Activated CD8-positive, alpha-beta T cell treated with anti-CD3 and anti-CD28 coated beads for 36 hours (primary cell): ENCODE measurements at regions of chr6 and their contacts with region 1.

Region 1: DNA sequence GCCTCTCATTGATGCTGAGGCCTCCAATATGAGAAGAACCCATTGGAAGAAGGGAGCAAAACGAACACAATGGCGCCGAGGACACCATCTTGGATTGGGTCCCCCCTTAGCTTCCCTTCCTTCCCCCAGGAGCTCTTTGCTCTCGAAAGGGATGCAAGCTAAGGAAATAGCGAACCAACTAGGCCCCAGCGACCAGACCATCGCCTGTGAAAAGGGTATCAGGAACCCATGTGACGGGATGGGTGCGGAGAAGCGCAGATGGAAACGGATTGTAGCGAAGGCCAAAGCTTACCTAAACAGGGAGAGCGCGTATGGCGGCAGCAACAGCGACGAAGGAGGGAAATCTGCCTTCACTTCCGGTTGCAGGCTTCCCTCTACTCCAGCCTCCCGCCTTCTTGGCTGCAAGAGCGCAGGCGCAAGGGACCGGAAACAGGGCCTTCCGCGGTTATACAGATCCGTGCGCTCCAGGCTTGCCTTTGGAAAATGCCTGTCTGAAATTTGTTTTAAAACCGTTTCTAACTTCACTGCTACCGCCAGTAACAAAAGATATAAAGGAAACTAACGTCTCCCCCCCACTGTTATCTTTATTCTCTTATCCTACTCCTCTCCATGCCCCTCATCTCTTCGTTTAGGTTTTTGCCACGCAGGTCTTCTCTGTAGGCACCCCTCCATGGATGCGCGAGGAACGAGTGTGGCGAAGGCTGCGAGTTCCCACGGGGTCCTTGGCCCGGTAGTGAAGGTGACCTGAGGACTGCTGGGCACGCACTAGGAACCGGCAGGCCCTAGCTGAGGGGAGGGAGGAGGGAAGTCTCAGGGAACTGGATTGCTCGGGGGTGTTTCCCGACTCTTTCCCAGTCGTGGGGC is at the start of gene DDX39B:
- DNase-seq: peak; percentile 95
- ATAC-seq: peak; percentile 79
- H3K4me3 Mint-ChIP-seq: peak within 1 kb of the TSS; percentile 81
- H3K27ac Mint-ChIP-seq: peak within 1 kb of the TSS; percentile 95
- H3K4me1 Mint-ChIP-seq: peaks cover 43% of the 10 kb centered on the region
- H3K27me3 Mint-ChIP-seq: no peaks in the 10 kb centered on the region
- CTCF ChIP-seq: no peak
- total RNA-seq, gene DDX39B: 568 to 572 TPM

Region 2: DNA sequence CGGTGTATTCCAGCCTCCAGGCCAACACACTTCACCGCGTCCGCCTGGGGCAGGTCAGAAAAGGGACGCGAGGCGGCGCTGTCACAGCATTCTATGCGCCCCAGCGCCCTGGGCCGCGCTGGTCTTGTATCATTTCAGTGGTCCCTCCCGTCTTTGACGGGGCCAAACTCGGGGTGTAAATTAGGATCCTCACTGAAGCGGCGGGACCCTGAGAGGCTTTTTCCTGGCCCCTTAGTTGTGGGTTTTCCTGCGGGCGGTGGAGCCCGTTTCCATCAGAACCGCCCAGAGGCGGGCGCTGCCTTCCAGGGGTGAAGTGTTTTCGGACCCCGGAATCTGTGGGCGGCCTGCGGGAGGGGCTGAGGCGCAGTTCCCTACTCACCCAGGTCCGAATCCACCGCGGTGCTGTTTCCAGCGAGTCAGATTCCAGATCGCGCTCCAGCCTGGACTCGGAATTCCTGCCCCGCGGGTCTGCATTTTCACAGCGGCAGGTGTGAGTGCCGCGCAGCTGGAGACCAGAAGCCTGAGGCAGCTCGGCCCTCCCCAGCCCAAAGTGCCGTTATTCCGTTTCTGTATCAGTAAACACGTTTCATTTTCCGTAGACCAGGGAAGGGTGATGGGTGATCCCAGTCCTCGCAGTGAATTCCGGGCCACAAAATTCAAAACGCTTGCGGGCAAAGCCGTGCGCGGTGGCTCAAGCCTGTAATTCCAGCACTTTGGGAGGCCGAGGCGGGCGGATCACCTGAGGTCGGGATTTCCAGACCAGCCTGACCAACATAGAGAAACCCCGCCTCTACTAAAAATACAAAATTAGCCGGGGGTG is 47.8 kb before region 1 on chr6:
- CTCF ChIA-PET with region 1: interaction called, 26 read pairs
- POLR2A ChIA-PET with region 1: interaction called, 35 read pairs
- intact Hi-C with region 1: loop called (anchors 2 kb)
- DNase-seq: peak; percentile 91
- ATAC-seq: peak; percentile 50
- H3K4me3 Mint-ChIP-seq: peak overlapping the region; percentile 89
- H3K27ac Mint-ChIP-seq: peak overlapping the region; percentile 92
- H3K4me1 Mint-ChIP-seq: peaks cover 36% of the 10 kb centered on the region
- H3K27me3 Mint-ChIP-seq: no peaks in the 10 kb centered on the region
- CTCF ChIP-seq: peak; percentile 91

Region 3: DNA sequence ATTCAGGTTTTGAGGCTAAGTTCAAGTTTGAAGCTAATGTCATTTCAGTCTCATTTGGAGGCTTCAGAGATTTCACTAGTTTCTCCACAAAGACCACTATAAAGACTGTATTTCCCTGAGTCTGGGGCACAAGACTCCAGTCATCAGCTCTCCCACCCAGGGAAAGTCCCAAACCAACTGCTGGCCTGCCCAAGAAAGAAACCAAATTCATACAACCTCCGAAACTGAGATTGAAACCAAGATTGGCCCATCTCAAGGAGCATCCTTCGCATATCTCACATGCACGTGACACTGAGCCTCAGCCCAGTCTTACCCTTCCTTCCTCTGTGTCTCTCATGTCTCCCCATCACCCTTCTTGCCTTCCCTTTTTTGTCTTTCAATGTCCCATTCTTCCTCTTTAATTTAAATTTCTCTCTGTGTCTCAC is 26.7 kb after region 1 on chr6:
- CTCF ChIA-PET with region 1: interaction called, 2,542 read pairs
- POLR2A ChIA-PET with region 1: interaction called, 97 read pairs
- intact Hi-C with region 1: no loop called
- DNase-seq: peak; percentile 88
- ATAC-seq: peak; percentile 53
- H3K4me3 Mint-ChIP-seq: peak overlapping the region; percentile 54
- H3K27ac Mint-ChIP-seq: peak overlapping the region; percentile 91
- H3K4me1 Mint-ChIP-seq: peaks cover 70% of the 10 kb centered on the region
- H3K27me3 Mint-ChIP-seq: no peaks in the 10 kb centered on the region
- CTCF ChIP-seq: no peak

Region 4: DNA sequence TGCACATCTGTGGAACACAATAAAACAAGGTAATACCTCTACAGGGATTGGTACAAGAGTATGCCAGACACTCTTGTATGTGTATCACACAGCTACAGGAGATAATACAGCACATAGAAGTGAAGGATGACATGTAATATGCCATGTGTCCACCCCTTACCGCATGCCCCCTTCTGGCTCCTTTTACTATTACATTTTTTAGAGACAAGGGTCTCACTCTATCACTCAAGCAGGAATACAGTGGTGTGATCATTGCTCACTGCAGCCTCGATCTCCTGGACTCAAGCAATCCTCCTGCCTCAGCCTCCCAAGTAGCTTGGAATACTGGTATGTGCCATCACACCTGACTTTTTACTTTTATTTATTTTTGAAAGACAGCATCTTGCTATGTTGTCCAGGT is 55.1 kb after region 1 on chr6:
- CTCF ChIA-PET with region 1: interaction called, 2,542 read pairs
- POLR2A ChIA-PET with region 1: interaction called, 32 read pairs
- intact Hi-C with region 1: loop called (anchors 1 kb)
- DNase-seq: peak; percentile 71
- ATAC-seq: peak; percentile 68
- H3K4me3 Mint-ChIP-seq: no peak overlapping the region
- H3K27ac Mint-ChIP-seq: peak overlapping the region; percentile 37
- H3K4me1 Mint-ChIP-seq: peaks cover 43% of the 10 kb centered on the region
- H3K27me3 Mint-ChIP-seq: no peaks in the 10 kb centered on the region
- CTCF ChIP-seq: peak; percentile 80

Region 5: DNA sequence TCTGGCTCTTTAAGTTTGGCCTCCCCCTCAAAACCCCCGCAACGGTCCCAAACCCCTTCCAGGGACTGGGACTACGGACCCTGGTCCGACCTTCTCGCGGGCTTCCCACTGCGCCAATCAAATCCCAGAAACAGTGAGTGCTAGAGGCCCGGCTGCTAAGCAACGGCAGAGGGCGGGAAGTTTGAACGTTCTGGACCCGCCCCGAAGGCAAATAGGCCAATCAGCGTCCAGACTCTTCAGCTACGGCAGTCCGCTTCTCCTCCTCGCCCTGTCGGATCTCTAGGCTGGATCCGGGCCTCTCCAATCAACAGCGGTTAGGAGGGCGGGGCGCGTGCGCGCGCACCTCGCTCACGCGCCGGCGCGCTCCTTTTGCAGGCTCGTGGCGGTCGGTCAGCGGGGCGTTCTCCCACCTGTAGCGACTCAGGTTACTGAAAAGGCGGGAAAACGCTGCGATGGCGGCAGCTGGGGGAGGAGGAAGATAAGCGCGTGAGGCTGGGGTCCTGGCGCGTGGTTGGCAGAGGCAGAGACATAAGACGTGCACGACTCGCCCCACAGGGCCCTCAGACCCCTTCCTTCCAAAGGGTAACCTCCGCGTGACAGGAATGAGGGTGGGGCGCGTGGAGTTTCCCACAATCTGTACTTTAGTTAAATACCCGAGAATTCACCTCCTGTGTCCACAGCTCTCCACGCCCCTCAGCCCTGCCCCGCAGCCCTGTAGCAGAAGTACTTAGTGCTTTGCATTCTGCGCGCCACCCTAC is 197.9 kb after region 1 on chr6 and contains the start of gene MSH5:
- CTCF ChIA-PET with region 1: interaction called, 3 read pairs
- POLR2A ChIA-PET with region 1: interaction called, 6 read pairs
- intact Hi-C with region 1: loop called (anchors 10 kb)
- DNase-seq: peak; percentile 99
- ATAC-seq: peak; percentile 83
- H3K4me3 Mint-ChIP-seq: peak within 1 kb of the TSS; percentile 97
- H3K27ac Mint-ChIP-seq: peak within 1 kb of the TSS; percentile 97
- H3K4me1 Mint-ChIP-seq: peaks cover 38% of the 10 kb centered on the region
- H3K27me3 Mint-ChIP-seq: no peaks in the 10 kb centered on the region
- CTCF ChIP-seq: no peak
- total RNA-seq, gene MSH5: 96.9 to 105 TPM